Naive thymus-derived CD4-positive, alpha-beta T cell (primary cell): ENCODE measurements at regions of chr17 and their contacts with region 1.

Region 1: GRCh38 chr17:78250891-78251794 is 19.7 kb downstream of the TMEM235 start:
- DNase-seq: peak; percentile 70 to 88 (median 82)
- ATAC-seq: peak; percentile 73
- H3K4me3 ChIP-seq: peak overlapping the region; percentile 73
- H3K4me3 Mint-ChIP-seq: peak overlapping the region; percentile 82 to 96 (median 92)
- H3K27ac ChIP-seq: peak overlapping the region; percentile 87
- H3K27ac Mint-ChIP-seq: peak overlapping the region; percentile 91 to 100 (median 98)
- H3K4me1 ChIP-seq: peaks cover 37 to 48% of the 10 kb centered on the region in 2 donors
- H3K4me1 Mint-ChIP-seq: peaks cover 24 to 57% (median 47%) of the 10 kb centered on the region in 7 donors
- H3K27me3 ChIP-seq: no peaks in the 10 kb centered on the region
- H3K27me3 Mint-ChIP-seq: peaks cover 0 to 4% (median 0%) of the 10 kb centered on the region in 5 donors

Region 2: GRCh38 chr17:77451245-77451893 is 799.8 kb before region 1 on chr17:
- CTCF ChIA-PET with region 1: no interaction called
- POLR2A ChIA-PET with region 1: no interaction called
- intact Hi-C with region 1: loop called in 1 of 2 experiments (anchors 5 kb)
- DNase-seq: peak in 8 of 9 donors; percentile 64 to 82 (median 74)
- ATAC-seq: peak; percentile 75
- H3K4me3 ChIP-seq: peak overlapping the region; percentile 77
- H3K4me3 Mint-ChIP-seq: peak overlapping the region; percentile 92 to 100 (median 98)
- H3K27ac ChIP-seq: peak overlapping the region; percentile 92
- H3K27ac Mint-ChIP-seq: peak overlapping the region; percentile 93 to 100 (median 98)
- H3K4me1 ChIP-seq: peaks cover 31 to 40% of the 10 kb centered on the region in 2 donors
- H3K4me1 Mint-ChIP-seq: peaks cover 31 to 73% (median 37%) of the 10 kb centered on the region in 7 donors
- H3K27me3 ChIP-seq: no peaks in the 10 kb centered on the region
- H3K27me3 Mint-ChIP-seq: no peaks in the 10 kb centered on the region

Region 3: DNA sequence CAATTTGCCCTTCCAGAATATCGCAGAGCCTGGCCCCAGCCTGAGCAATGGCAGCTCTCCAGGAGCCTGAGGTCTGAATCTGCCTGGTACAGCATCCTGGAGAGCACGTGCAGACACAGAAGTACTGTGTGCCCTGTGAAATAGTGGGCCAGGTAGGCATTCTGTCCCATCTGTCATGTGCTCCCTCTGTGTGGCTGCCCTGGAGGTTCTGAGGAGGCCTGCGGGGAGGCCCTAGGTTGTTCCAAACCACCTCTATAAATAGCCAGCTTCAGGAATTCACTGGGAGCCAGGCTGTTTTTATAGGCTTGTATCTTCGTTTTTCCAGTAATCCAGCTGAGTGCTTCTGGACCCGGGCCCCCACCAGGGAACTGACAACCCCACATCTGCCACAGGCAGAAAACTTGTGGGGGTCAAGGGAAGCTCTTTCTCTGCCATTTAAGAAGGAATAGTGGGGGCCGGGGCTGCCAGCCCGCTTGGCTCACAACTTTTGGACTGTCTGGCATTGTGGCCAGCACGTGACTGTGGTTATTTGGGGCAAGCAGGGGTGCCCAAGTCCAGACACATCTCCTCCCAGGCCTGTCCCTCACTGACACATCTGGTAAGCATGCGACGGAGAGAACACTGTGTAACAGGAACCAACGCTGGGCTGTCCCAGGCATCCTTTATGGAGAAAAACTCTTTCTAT is 648.9 kb before region 1 on chr17:
- CTCF ChIA-PET with region 1: no interaction called
- POLR2A ChIA-PET with region 1: no interaction called
- intact Hi-C with region 1: no loop called
- DNase-seq: no peak
- ATAC-seq: no peak
- H3K4me3 ChIP-seq: no peak overlapping the region
- H3K4me3 Mint-ChIP-seq: no peak overlapping the region
- H3K27ac ChIP-seq: no peak overlapping the region
- H3K27ac Mint-ChIP-seq: no peak overlapping the region
- H3K4me1 ChIP-seq: no peaks in the 10 kb centered on the region
- H3K4me1 Mint-ChIP-seq: no peaks in the 10 kb centered on the region
- H3K27me3 ChIP-seq: no peaks in the 10 kb centered on the region
- H3K27me3 Mint-ChIP-seq: peaks cover 0 to 25% (median 0%) of the 10 kb centered on the region in 5 donors

Region 4: GRCh38 chr17:78082988-78083387 is 168.2 kb before region 1 on chr17:
- CTCF ChIA-PET with region 1: interaction called, 3 read pairs
- POLR2A ChIA-PET with region 1: interaction called, 3 read pairs
- intact Hi-C with region 1: loop called in 1 of 2 experiments (anchors 1 kb)
- DNase-seq: no peak
- ATAC-seq: no peak
- H3K4me3 ChIP-seq: no peak overlapping the region
- H3K4me3 Mint-ChIP-seq: no peak overlapping the region
- H3K27ac ChIP-seq: no peak overlapping the region
- H3K27ac Mint-ChIP-seq: no peak overlapping the region
- H3K4me1 ChIP-seq: no peaks in the 10 kb centered on the region
- H3K4me1 Mint-ChIP-seq: peaks cover 0 to 12% (median 0%) of the 10 kb centered on the region in 7 donors
- H3K27me3 ChIP-seq: no peaks in the 10 kb centered on the region
- H3K27me3 Mint-ChIP-seq: no peaks in the 10 kb centered on the region

Region 5: GRCh38 chr17:78133971-78134898 is 116.9 kb before region 1 on chr17:
- CTCF ChIA-PET with region 1: interaction called, 6 read pairs
- POLR2A ChIA-PET with region 1: interaction called, 23 read pairs
- intact Hi-C with region 1: loop called (anchors 5 kb)
- DNase-seq: peak in 8 of 9 donors; percentile 72 to 89 (median 84)
- ATAC-seq: peak; percentile 58
- H3K4me3 ChIP-seq: peak overlapping the region; percentile 95
- H3K4me3 Mint-ChIP-seq: peak overlapping the region; percentile 81 to 99 (median 92)
- H3K27ac ChIP-seq: peak overlapping the region; percentile 77
- H3K27ac Mint-ChIP-seq: peak overlapping the region; percentile 68 to 95 (median 87)
- H3K4me1 ChIP-seq: peaks cover 56 to 66% of the 10 kb centered on the region in 2 donors
- H3K4me1 Mint-ChIP-seq: peaks cover 55 to 73% (median 66%) of the 10 kb centered on the region in 7 donors
- H3K27me3 ChIP-seq: no peaks in the 10 kb centered on the region
- H3K27me3 Mint-ChIP-seq: peaks cover 0 to 3% (median 0%) of the 10 kb centered on the region in 5 donors

Region 6: GRCh38 chr17:78147315-78147998 is 103.7 kb before region 1 on chr17:
- CTCF ChIA-PET with region 1: no interaction called
- POLR2A ChIA-PET with region 1: no interaction called
- intact Hi-C with region 1: no loop called
- DNase-seq: peak in 4 of 9 donors; percentile 30 to 44 (median 36)
- ATAC-seq: peak; percentile 74
- H3K4me3 ChIP-seq: no peak overlapping the region
- H3K4me3 Mint-ChIP-seq: peak overlapping the region in 4 of 10 donors; percentile 5 to 46 (median 18)
- H3K27ac ChIP-seq: peak overlapping the region; percentile 25
- H3K27ac Mint-ChIP-seq: peak overlapping the region; percentile 3 to 87 (median 64)
- H3K4me1 ChIP-seq: peaks cover 0 to 16% of the 10 kb centered on the region in 2 donors
- H3K4me1 Mint-ChIP-seq: peaks cover 15 to 37% (median 32%) of the 10 kb centered on the region in 7 donors
- H3K27me3 ChIP-seq: no peaks in the 10 kb centered on the region
- H3K27me3 Mint-ChIP-seq: peaks cover 0 to 4% (median 0%) of the 10 kb centered on the region in 5 donors

Region 7: GRCh38 chr17:78289802-78290363 is 38.7 kb after region 1 on chr17:
- CTCF ChIA-PET with region 1: interaction called, 20 read pairs
- POLR2A ChIA-PET with region 1: interaction called, 6 read pairs
- intact Hi-C with region 1: loop called (anchors 1 kb)
- DNase-seq: peak; percentile 41 to 82 (median 71)
- ATAC-seq: peak; percentile 97
- H3K4me3 ChIP-seq: no peak overlapping the region
- H3K4me3 Mint-ChIP-seq: no peak overlapping the region
- H3K27ac ChIP-seq: no peak overlapping the region
- H3K27ac Mint-ChIP-seq: no peak overlapping the region
- H3K4me1 ChIP-seq: peaks cover 4 to 8% of the 10 kb centered on the region in 2 donors
- H3K4me1 Mint-ChIP-seq: peaks cover 0 to 10% (median 5%) of the 10 kb centered on the region in 7 donors
- H3K27me3 ChIP-seq: no peaks in the 10 kb centered on the region
- H3K27me3 Mint-ChIP-seq: no peaks in the 10 kb centered on the region

Region 8: DNA sequence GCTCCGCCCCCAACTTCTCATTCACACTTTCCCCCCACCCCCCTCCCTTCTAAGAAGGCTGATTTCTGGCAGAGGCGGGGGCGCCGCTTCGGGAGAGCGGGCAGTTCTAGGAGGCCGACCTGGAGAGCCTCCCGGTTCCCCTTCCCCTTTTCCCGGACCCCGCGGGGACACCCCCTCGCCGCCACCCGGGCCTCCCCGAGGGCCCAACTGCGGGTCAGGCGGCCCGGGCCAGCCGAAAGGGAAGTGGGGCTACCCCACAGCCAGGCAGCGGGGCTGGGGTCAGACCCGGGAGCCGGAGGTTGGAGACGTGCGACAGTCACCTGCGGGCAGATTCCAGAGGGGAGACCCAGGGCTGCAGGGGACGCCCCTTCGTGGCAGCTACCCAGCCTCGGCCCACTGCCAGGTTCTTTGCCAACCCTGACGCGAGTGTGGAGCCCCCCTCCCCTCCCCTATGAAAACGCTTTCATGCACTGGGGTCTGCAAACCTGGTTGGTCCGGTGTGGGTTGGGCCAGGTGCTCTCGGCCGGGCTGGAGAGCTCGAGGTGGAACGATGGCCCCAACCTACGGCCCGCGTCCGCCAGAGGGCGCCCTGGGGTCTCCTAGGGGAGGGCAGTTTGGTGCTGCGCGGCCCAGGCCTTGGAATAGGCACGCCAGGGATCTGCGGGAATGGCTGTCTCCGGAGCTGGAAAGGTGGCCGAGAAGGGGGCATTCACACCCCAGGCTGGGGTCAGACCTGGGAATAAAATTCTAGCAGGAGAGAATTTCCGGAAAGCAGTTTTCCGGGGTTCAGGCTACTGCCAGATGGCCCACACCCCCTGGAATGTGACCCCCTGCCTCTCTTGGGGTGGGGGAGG is 109.5 kb after region 1 on chr17:
- CTCF ChIA-PET with region 1: interaction called, 6 read pairs
- POLR2A ChIA-PET with region 1: interaction called, 6 read pairs
- intact Hi-C with region 1: loop called (anchors 1 kb)
- DNase-seq: peak; percentile 73 to 98 (median 83)
- ATAC-seq: peak; percentile 42
- H3K4me3 ChIP-seq: peak overlapping the region; percentile 47
- H3K4me3 Mint-ChIP-seq: peak overlapping the region; percentile 83 to 93 (median 88)
- H3K27ac ChIP-seq: peak overlapping the region; percentile 99
- H3K27ac Mint-ChIP-seq: peak overlapping the region; percentile 54 to 97 (median 93)
- H3K4me1 ChIP-seq: peaks cover 25 to 28% of the 10 kb centered on the region in 2 donors
- H3K4me1 Mint-ChIP-seq: peaks cover 13 to 46% (median 27%) of the 10 kb centered on the region in 7 donors
- H3K27me3 ChIP-seq: no peaks in the 10 kb centered on the region
- H3K27me3 Mint-ChIP-seq: peaks cover 0 to 2% (median 0%) of the 10 kb centered on the region in 5 donors

Region 9: DNA sequence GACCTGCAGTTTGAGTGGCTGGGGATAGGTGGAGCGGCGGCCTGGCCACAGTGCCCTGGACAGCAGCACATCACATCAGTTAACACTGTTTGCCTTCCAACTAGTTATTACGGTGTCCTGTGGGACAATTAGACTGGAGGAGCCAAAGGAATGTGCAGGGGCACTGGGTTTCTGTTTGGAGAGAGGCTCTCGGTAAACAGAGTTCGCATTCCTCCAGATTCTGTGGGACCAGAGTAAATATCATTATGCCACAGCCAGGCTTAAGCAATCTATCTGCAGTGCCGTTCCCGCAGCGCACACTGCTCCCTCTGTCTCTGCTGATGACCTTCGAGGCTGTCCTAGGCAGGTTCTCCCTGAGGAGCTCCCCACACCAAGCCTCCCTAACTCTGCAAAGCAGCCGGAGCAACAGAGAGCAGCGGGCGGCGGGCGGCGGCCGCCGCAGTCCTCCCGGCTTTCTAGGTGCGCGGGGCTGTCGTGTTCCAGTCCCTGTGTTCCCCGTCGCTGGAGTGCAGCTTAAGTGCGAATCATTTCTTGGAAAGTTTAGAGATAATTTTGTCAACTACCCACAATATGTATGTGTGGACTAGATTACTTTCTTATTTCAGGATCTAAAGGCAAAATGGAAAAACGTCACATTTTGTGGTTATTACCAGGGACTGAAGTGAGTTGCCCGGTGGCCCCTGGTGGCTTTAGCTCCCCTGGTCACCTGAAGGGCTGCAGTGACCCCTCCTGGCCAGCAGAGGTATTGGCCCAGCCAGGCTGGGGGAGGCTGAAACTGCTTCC is 170.5 kb after region 1 on chr17:
- CTCF ChIA-PET with region 1: interaction called, 50 read pairs
- POLR2A ChIA-PET with region 1: interaction called, 10 read pairs
- intact Hi-C with region 1: loop called (anchors 1 to 2 kb)
- DNase-seq: peak; percentile 48 to 81 (median 64)
- ATAC-seq: peak; percentile 94
- H3K4me3 ChIP-seq: no peak overlapping the region
- H3K4me3 Mint-ChIP-seq: no peak overlapping the region
- H3K27ac ChIP-seq: no peak overlapping the region
- H3K27ac Mint-ChIP-seq: peak overlapping the region in 8 of 9 donors; percentile 11 to 69 (median 49)
- H3K4me1 ChIP-seq: peaks cover 0 to under 1% of the 10 kb centered on the region in 2 donors
- H3K4me1 Mint-ChIP-seq: peaks cover 9 to 52% (median 23%) of the 10 kb centered on the region in 7 donors
- H3K27me3 ChIP-seq: no peaks in the 10 kb centered on the region
- H3K27me3 Mint-ChIP-seq: no peaks in the 10 kb centered on the region